IMR-90 (cell line): ENCODE measurements at regions of chr19 and their contacts with region 1.

Region 1: GRCh38 chr19:39133431-39134270 is 8.1 kb downstream of the PAK4 start:
- DNase-seq: no peak
- ATAC-seq: no peak
- H3K4me3 ChIP-seq: no peak overlapping the region
- H3K27ac ChIP-seq: no peak overlapping the region
- H3K4me1 ChIP-seq: peaks cover 7% of the 10 kb centered on the region; the same call in 1 of the 2 replicates
- H3K27me3 ChIP-seq: no peaks in the 10 kb centered on the region
- CTCF ChIP-seq: no peak
- POLR2A ChIP-seq: no peak
- RAD21 ChIP-seq: no peak

Region 2: GRCh38 chr19:39187559-39187957 is 53.9 kb after region 1 on chr19:
- CTCF ChIA-PET with region 1: interaction called, 3 read pairs
- POLR2A ChIA-PET with region 1: no interaction called
- dilution Hi-C with region 1: no loop called
- in situ Hi-C with region 1: no loop called
- intact Hi-C with region 1: loop called (anchors 2 kb)
- DNase-seq: no peak
- ATAC-seq: peak; percentile 7; the same call in 1 of the 2 replicates
- H3K4me3 ChIP-seq: no peak overlapping the region
- H3K27ac ChIP-seq: no peak overlapping the region
- H3K4me1 ChIP-seq: no peaks in the 10 kb centered on the region
- H3K27me3 ChIP-seq: peaks cover 5% of the 10 kb centered on the region; the same call in 1 of the 2 replicates
- CTCF ChIP-seq: no peak
- POLR2A ChIP-seq: no peak
- RAD21 ChIP-seq: no peak

Region 3: DNA sequence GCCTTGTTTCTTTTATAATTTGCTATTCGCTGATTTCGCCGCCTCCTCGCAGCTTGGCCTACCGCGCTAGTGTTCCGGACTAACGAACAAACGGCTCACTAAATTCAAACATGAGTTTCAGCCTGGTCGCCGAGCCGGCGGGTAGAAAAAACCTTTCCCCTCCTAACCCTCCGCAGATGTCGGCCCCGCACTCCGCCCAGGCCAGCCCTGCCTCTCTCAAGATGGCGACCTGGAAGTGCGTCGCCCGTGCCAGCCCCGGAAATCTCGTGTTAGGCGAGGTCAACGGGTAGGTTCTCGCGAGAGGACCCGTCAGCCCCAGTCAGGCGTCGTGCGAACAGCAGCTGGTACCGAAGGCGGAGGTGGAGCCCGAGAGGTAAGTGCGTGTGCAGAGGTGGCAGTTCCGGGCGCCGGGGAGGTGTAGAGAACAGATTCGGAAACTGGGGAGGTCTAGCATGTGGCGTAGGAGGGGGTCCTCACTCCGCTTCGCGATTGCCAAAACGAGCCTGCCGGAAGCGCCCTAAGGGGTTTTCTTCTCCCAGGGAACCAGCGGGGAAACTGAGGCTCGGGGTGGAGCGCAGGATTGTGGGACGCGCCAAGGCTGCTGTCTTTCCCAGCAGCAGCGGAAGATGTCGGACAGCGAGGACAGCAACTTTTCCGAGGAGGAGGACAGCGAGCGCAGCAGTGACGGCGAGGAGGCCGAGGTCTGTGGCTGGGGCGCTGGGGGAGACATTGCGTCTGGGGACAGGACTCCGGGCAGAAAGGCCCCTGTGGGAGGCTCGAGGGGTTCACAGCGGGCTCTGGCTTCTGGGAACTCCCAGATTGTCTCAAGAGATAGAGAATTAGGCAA is 311.8 kb after region 1 on chr19 and contains the start of gene SUPT5H:
- CTCF ChIA-PET with region 1: no interaction called
- POLR2A ChIA-PET with region 1: interaction called, 16 read pairs
- dilution Hi-C with region 1: no loop called
- in situ Hi-C with region 1: no loop called
- intact Hi-C with region 1: no loop called
- DNase-seq: peak; percentile 97
- ATAC-seq: peak; percentile 96
- H3K4me3 ChIP-seq: peak within 1 kb of the TSS; percentile 83
- H3K27ac ChIP-seq: peak within 1 kb of the TSS; percentile 96
- H3K4me1 ChIP-seq: peaks cover 5% of the 10 kb centered on the region
- H3K27me3 ChIP-seq: no peaks in the 10 kb centered on the region
- CTCF ChIP-seq: no peak
- POLR2A ChIP-seq: peak; percentile 94
- RAD21 ChIP-seq: no peak
- total RNA-seq, gene SUPT5H: 75.3 and 86.9 TPM in 2 replicates